Posterior vena cava (tissue), 2 donors: ENCODE measurements at regions of chr12 and their contacts with region 1.

Region 1: DNA sequence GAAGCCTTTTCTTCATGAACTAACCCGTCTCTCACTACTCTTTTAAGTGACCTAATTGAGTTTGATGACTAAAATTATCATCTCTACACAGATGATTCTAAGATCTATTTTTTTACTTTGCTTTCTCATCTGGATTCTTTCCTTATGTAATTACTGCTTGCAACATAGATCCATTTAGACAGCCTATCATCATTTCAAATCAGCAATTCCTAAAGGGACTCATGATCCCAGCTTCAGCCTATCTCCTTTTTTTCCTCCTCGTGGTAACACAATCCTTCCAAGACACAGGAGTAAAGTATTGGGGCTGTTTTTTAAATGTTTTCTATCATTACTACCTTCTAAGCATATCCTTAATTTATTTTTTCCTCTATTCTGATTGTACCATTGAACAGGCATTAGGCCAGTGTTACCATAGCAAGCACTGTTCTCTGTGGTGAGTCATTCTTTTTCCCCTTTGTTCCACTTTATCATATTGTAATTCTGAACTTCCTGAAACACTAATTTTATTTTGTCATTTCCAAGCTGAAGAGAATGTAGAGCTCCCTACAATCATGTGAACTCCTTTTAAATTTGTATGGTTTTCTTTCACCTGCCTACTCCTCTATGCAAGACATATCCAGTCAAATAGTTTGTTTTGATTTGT is 190.4 kb upstream of the FAR2 start:
- DNase-seq: no peak

Region 2: GRCh38 chr12:28987538-28988324 is 29.1 kb after region 1 on chr12:
- intact Hi-C with region 1: loop called in 1 of 2 experiments (anchors 1 kb)
- DNase-seq: no peak